Activated naive CD4-positive, alpha-beta T cell treated with anti-CD3 and anti-CD28 coated beads, Interleukin-2, amount 10 ng/mL, durations not matched to agents 7 days and 5 days (primary cell): ENCODE measurements at regions of chr1 and their contacts with region 1.

Region 1: GRCh38 chr1:24415334-24415909 is at the start of gene NIPAL3:
- DNase-seq: peak; percentile 99
- H3K4me3 Mint-ChIP-seq: peak within 1 kb of the TSS; percentile 86
- H3K27ac Mint-ChIP-seq: peak within 1 kb of the TSS; percentile 88
- H3K4me1 Mint-ChIP-seq: peaks cover 72% of the 10 kb centered on the region
- H3K27me3 Mint-ChIP-seq: no peaks in the 10 kb centered on the region

Region 2: DNA sequence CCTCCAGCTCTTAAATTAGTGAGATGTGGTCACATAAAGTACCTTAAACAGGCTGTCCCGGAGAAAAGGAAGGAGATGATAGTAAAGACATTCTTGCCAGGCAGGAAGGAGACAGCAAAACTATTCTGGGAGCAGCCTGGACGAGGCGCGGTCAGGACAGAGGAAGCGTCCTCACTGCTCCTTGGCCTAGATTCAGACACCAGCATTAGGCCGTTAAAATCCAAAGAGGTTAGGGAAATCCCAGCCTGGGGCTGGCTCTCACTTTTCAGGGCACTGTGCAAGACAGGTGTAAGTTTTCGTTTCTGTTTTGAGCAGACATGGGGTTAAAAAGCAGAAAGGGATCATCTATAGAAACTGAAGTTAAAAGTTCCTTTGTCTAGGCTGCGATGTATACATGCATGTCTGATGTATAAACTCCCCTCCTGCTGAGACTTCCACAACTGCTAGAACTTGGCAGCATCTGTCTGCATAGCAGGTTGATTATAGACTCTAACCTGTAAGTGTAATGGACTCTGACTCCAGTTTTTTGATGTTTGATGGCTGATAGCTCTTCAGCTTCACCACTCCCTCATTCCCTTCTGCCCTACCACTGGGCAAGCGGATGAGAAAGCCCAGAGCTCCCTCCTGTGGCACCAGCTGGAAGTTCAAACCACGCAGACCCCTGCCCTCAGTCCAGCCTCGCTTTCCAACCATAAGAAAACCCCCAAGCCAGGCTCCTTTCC is 23.4 kb before region 1 on chr1:
- CTCF ChIA-PET with region 1: interaction called, 13 read pairs
- DNase-seq: peak; percentile 74
- H3K4me3 Mint-ChIP-seq: peak overlapping the region; percentile 62
- H3K27ac Mint-ChIP-seq: peak overlapping the region; percentile 91
- H3K4me1 Mint-ChIP-seq: peaks cover 36% of the 10 kb centered on the region
- H3K27me3 Mint-ChIP-seq: no peaks in the 10 kb centered on the region

Region 3: GRCh38 chr1:24486331-24487065 is 71.1 kb after region 1 on chr1:
- CTCF ChIA-PET with region 1: interaction called, 40 read pairs
- DNase-seq: peak; percentile 77
- H3K4me3 Mint-ChIP-seq: peak overlapping the region; percentile 65
- H3K27ac Mint-ChIP-seq: peak overlapping the region; percentile 97
- H3K4me1 Mint-ChIP-seq: peaks cover 87% of the 10 kb centered on the region
- H3K27me3 Mint-ChIP-seq: no peaks in the 10 kb centered on the region

Region 4: GRCh38 chr1:24526940-24527542 is 111.6 kb after region 1 on chr1:
- CTCF ChIA-PET with region 1: interaction called, 72 read pairs
- DNase-seq: peak; percentile 66
- H3K4me3 Mint-ChIP-seq: no peak overlapping the region
- H3K27ac Mint-ChIP-seq: no peak overlapping the region
- H3K4me1 Mint-ChIP-seq: peaks cover 51% of the 10 kb centered on the region
- H3K27me3 Mint-ChIP-seq: no peaks in the 10 kb centered on the region

Region 5: DNA sequence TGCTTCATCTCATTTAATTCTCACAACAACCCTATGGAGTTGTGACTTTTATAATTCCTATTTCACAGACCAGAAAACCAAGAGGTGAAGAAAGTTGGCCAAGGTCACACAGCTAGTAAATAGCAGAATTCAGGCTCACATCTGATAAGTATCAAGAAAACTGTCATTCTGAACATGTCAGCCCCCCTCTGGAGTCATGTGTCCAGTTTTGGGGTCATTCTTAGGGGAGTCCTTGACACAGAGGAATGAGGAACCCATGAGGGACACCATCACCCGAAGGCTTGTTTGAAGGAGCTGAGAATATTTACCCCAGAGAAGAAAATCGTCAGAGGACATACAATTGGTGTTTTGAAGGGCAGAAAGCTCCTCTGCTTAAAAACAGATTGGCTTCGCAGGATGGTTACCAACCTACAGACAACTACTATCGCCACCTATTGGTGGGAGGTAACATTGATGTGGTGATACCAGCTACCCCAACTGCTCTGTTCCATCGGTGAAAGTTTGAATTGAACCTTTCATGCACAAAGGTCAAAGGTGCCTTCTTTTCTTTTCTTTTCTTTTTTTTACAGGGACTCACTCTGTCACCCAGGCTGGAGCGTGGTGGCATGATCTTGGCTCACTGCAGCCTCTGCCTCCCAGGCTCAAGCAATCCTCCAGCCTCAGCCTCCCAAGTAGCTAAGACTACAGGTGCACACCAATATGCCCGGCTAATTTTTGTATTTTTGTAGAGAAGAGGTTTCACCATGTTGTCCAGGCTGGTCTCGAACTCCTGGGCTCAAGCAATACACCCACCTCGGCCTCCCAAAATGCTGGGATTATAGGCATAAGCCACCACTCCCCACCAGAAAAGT is 171.8 kb after region 1 on chr1:
- CTCF ChIA-PET with region 1: interaction called, 43 read pairs
- DNase-seq: peak; percentile 64
- H3K4me3 Mint-ChIP-seq: no peak overlapping the region
- H3K27ac Mint-ChIP-seq: no peak overlapping the region
- H3K4me1 Mint-ChIP-seq: peaks cover 9% of the 10 kb centered on the region
- H3K27me3 Mint-ChIP-seq: peaks cover 56% of the 10 kb centered on the region